Mucosa of descending colon (tissue), 3 donors: ENCODE measurements at regions of chr12 and their contacts with region 1.

Region 1: GRCh38 chr12:89448951-89449371 is 75.6 kb downstream of the GALNT4 start:
- DNase-seq: no peak
- ATAC-seq: peak; percentile 15
- H3K4me3 ChIP-seq: no peak overlapping the region
- H3K4me1 ChIP-seq: no peaks in the 10 kb centered on the region
- CTCF ChIP-seq: no peak

Region 2: DNA sequence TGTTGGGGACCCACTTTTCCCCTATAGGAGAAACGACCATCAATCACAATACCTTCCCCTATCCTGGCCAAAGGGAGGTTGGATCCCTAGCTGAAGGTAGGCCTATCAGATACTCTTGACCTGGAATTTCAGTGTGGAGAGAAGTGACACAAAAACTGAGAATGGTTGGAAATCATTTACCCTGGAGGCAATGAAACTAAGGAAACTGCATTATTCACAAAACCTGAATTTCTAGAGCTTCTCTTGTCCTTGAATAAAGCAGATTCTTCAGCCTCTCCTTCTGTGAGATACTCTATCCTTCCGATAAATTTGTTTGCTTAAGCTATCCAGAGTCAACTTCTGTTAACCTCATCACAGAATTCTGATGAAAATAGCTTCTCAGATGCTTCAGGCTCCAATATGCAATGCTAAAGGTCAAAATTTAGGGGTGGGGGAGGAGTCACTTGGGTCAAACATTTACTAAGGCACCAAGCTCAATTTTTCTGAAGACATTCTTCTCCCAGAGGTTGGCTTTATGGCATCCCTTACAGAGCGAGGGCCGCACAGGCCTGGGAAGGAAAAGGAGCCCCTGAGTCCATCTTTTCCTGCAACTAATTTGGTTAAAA is 69.6 kb before region 1 on chr12:
- intact Hi-C with region 1: loop called in 1 of 2 experiments (anchors 5 kb)
- DNase-seq: peak in 1 of 3 donors; percentile 51
- ATAC-seq: peak; percentile 20
- H3K4me3 ChIP-seq: no peak overlapping the region
- H3K4me1 ChIP-seq: peaks cover 36% of the 10 kb centered on the region
- CTCF ChIP-seq: no peak

Region 3: GRCh38 chr12:90042920-90043641 is 594.1 kb after region 1 on chr12:
- intact Hi-C with region 1: no loop called
- DNase-seq: no peak
- ATAC-seq: no peak
- H3K4me3 ChIP-seq: no peak overlapping the region
- H3K4me1 ChIP-seq: no peaks in the 10 kb centered on the region
- CTCF ChIP-seq: no peak